GM10248 (cell line): ENCODE measurements at regions of chr1 and their contacts with region 1.

Region 1: GRCh38 chr1:165367375-165367993 is 11.0 kb upstream of the LMX1A start:
- DNase-seq: peak; percentile 78
- CTCF ChIP-seq: peak; percentile 94

Region 2: GRCh38 chr1:165114022-165114888 is 253.2 kb before region 1 on chr1:
- CTCF ChIA-PET with region 1: interaction called, 10 read pairs
- POLR2A ChIA-PET with region 1: no interaction called
- DNase-seq: no peak
- CTCF ChIP-seq: peak; percentile 57

Region 3: GRCh38 chr1:165339164-165339563 is 28.3 kb before region 1 on chr1:
- CTCF ChIA-PET with region 1: interaction called, 43 read pairs
- POLR2A ChIA-PET with region 1: no interaction called
- DNase-seq: no peak
- CTCF ChIP-seq: no peak

Region 4: GRCh38 chr1:165355977-165356811 is 11.3 kb before region 1 on chr1 and contains the start of gene LMX1A:
- CTCF ChIA-PET with region 1: interaction called, 40 read pairs
- POLR2A ChIA-PET with region 1: no interaction called
- DNase-seq: no peak
- CTCF ChIP-seq: no peak

Region 5: DNA sequence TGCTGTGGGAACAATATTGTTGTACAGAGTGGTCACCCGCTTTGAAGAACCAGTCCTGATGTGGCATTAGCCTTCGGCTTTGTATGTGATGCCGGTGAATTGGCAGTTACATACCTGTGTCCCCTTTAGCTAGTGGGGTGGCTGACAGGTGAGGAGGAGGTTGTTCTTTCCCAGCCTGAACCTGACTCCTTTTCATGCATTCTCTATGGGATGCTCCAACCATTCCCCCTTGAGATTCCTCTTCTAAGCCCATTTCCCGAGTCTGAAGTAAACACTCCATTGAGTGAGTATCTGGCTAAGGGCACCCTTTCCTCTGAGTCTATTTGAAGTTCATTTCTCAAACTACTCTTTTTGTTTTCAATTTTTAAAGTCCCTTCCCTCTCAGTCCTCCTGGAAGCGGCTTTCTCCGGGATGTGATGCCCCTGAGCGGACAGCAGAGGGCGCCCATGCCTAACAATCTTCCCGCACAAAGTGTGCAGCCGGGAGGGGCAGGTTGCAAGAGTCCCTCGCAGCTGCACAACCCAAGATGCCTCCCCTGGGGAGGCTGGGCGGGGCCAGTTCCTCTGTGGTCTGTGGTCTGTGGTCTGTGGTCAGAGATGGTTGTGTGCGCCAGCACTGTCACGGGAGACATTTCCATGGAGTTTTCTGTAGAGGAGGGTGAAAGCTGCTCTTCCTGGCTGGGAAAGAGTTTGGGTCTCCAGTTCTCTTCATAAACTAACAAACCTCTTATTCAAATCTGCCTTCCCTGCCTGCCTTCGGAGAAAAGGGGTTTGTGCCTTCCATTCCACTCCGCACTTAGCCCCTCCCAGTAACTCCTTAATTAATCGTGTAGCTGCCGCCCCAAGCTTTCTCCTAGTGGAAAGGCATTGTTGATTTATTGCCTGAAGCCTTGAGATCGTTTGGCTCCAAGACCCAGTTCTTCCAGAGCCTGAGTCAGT is 25.4 kb after region 1 on chr1:
- CTCF ChIA-PET with region 1: interaction called, 70 read pairs
- POLR2A ChIA-PET with region 1: no interaction called
- DNase-seq: peak; percentile 86
- CTCF ChIP-seq: peak; percentile 89

Region 6: GRCh38 chr1:165575468-165576099 is 208.1 kb after region 1 on chr1:
- CTCF ChIA-PET with region 1: interaction called, 18 read pairs
- POLR2A ChIA-PET with region 1: no interaction called
- DNase-seq: no peak
- CTCF ChIP-seq: no peak

Region 7: DNA sequence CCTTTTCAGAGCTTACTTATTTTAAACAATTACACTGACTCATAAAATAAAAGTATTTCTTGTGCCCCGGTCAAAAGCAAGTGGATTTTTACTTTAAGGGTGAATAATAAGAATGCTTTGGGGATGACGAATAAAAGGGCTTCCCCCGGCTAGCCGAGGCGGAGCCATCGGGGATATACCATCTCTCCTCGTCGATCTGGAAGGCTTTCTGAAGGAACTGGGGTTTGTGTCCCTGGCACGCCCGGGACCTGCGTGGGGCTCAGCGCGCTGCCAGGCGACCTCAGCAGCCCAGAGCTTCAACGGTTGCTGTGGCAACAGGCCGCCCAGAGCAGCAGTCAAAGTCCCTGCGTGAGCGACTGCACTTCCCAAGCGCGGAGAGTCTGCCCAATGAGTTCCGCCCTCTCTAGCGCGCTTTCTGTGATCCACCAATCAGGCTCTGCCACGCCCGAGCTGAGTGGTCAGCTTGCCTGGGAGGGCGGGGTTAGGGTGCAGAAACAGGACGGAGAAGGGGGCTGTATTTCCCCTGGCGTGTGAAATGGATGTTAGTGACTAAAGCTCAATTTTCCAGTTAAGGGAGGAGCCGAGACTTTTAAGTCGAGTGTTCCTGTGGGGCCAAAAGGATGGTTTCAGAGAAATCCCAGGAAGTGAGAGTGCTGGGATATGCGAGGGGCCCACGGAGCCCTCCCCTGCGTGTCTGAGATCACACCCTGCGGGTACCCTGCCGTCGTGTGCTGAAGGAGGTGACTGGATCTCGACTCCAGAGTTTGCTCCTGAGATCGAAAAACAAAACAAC is 230.6 kb after region 1 on chr1:
- CTCF ChIA-PET with region 1: interaction called, 62 read pairs
- POLR2A ChIA-PET with region 1: no interaction called
- DNase-seq: peak; percentile 95
- CTCF ChIP-seq: no peak